ENCODE measurements at regions of chr2 and their contacts with region 1.

Region 1: GRCh38 chr2:231514103-231514950 is 15.9 kb downstream of the NMUR1 start:
- DNase-seq: peak; percentile 99
- ATAC-seq: peak; percentile 99
- H3K4me3 Mint-ChIP-seq: peak overlapping the region; percentile 85
- H3K27ac Mint-ChIP-seq: peak overlapping the region; percentile 97
- H3K4me1 Mint-ChIP-seq: peaks cover 17% of the 10 kb centered on the region
- H3K27me3 Mint-ChIP-seq: no peaks in the 10 kb centered on the region
- CTCF ChIP-seq: no peak

Region 2: DNA sequence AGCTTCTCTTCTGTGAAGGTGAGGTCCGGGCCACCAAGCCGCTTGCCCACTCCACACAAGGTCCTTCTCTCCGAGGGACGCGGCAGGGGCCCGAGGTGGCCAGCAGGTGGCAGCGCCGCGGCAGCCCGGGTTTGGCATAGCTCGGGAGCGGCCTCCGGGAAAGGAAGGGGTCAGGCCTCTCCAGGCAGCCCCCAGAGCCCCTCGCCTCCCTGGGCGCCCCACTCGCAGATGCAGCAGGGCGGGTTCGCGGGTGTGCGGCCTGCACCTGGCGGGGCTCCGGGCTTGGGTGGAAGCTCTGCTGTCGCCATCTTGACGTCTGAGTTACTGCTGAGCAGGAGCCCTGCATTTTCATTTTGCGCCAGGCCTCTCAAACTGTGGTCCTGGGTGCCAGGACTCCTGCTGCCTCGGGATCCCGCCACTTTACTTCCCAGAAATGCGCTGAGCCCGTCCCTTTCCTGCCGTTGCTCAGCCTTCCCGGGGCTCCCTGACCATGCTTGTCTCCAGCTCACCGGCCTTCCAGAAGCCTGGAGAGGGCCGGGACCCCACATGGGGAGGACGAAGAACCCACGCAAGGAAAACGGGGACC is 31.4 kb before region 1 on chr2:
- CTCF ChIA-PET with region 1: interaction called, 20 read pairs
- POLR2A ChIA-PET with region 1: interaction called, 4 read pairs
- intact Hi-C with region 1: no loop called
- DNase-seq: peak; percentile 80
- ATAC-seq: peak; percentile 85
- H3K4me3 Mint-ChIP-seq: peak overlapping the region; percentile 77
- H3K27ac Mint-ChIP-seq: peak overlapping the region; percentile 90
- H3K4me1 Mint-ChIP-seq: peaks cover 11% of the 10 kb centered on the region
- H3K27me3 Mint-ChIP-seq: no peaks in the 10 kb centered on the region
- CTCF ChIP-seq: peak; percentile 91

Region 3: GRCh38 chr2:231530091-231531011 is 16.0 kb after region 1 on chr2 and contains the start of gene NMUR1:
- CTCF ChIA-PET with region 1: interaction called, 20 read pairs
- POLR2A ChIA-PET with region 1: interaction called, 6 read pairs
- intact Hi-C with region 1: no loop called
- DNase-seq: peak; percentile 70
- ATAC-seq: peak; percentile 94
- H3K4me3 Mint-ChIP-seq: peak within 1 kb of the TSS; percentile 19
- H3K27ac Mint-ChIP-seq: no peak within 1 kb of the TSS
- H3K4me1 Mint-ChIP-seq: peaks cover 13% of the 10 kb centered on the region
- H3K27me3 Mint-ChIP-seq: peaks cover 19% of the 10 kb centered on the region
- CTCF ChIP-seq: peak; percentile 98
- total RNA-seq, gene NMUR1: 0.09 TPM in 1 of 2 experiments, not detected in the other

Region 4: GRCh38 chr2:231557571-231558237 is 43.4 kb after region 1 on chr2:
- CTCF ChIA-PET with region 1: interaction called, 33 read pairs
- POLR2A ChIA-PET with region 1: interaction called, 3 read pairs
- intact Hi-C with region 1: loop called (anchors 5 kb)
- DNase-seq: peak; percentile 74
- ATAC-seq: peak; percentile 96
- H3K4me3 Mint-ChIP-seq: no peak overlapping the region
- H3K27ac Mint-ChIP-seq: no peak overlapping the region
- H3K4me1 Mint-ChIP-seq: peaks cover 25% of the 10 kb centered on the region
- H3K27me3 Mint-ChIP-seq: no peaks in the 10 kb centered on the region
- CTCF ChIP-seq: peak; percentile 51

Region 5: GRCh38 chr2:231604685-231605606 is 90.6 kb after region 1 on chr2:
- CTCF ChIA-PET with region 1: interaction called, 27 read pairs
- POLR2A ChIA-PET with region 1: no interaction called
- intact Hi-C with region 1: loop called (anchors 5 kb)
- DNase-seq: peak; percentile 96
- ATAC-seq: peak; percentile 77
- H3K4me3 Mint-ChIP-seq: peak overlapping the region; percentile 50
- H3K27ac Mint-ChIP-seq: no peak overlapping the region
- H3K4me1 Mint-ChIP-seq: peaks cover 14% of the 10 kb centered on the region
- H3K27me3 Mint-ChIP-seq: peaks cover 4% of the 10 kb centered on the region
- CTCF ChIP-seq: no peak